Kidney (tissue), 22 donors: ENCODE measurements at regions of chr14 and their contacts with region 1.

Region 1: DNA sequence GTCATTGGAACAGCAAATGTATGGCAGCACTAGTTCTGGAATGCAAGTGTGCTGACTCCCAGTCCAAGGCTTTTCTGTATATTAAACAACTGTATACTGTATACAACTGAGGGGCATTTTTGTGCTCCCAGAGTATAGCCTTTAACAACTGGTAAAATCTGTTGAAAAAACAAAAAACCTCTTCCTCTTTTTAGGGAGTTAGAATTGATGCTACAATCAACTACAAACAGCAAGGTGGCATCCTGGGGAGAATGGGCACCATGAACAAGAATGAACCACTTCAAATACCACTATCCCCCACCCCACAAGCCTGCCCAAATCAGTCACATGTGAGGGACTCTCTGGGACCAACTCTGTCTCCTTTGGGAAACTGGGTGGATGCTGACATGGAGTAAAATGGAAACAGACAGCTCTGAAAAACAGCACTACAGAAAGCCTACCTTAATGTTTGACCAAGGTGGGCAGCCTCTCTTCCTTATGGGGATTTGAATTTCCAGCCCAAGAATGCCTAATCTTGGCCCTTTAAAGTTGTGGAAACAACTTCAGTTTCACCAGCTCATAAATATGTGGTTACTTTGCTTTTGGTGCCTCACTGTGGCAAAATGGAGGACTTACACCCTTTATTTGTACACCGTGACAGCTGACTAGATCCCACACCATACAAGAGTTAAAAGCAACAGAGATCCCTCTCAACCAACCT is 7.5 kb downstream of the VTI1B start:
- DNase-seq: peak in 3 of 5 donors; percentile 45 to 75 (median 69)
- H3K4me3 ChIP-seq: no peak overlapping the region
- H3K27ac ChIP-seq: no peak overlapping the region
- H3K4me1 ChIP-seq: peaks cover 0 to 6% (median 0%) of the 10 kb centered on the region in 3 donors
- H3K27me3 ChIP-seq: no peaks in the 10 kb centered on the region
- CTCF ChIP-seq: peak; percentile 73

Region 2: DNA sequence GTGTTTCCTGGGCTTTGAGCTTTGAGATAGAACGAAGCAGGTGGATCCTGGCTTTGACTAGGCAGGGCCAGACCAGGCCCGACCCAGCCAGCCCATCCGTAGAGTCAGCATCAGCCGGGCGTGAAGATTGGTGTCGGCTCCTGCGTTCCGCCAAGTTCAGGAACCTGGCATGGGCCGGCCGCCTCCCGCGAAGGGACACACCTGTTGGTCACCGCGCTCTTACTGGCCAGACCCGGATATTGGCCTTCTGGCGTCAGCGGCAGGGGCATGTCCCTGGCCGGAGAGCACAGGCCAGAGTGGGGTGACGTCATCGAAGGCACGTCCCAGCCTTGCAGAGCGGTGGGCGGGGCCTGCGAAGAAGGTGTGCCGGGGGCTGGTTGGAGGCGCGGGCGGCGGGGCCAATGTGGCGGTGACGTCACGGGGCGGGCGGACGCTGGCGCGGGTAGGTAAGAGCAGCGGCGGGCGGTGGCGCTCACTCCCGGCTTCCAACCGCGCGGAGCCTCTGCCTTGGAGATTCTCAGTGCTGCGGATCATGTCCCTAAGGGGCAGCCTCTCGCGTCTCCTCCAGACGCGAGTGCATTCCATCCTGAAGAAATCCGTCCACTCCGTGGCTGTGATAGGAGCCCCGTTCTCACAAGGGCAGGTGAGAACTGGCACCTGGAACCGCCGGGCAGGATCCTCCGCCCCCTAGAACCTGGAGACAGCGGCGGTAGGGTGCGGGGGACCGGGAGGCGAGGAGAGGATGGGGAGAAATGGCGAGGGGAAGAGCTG is 47.3 kb before region 1 on chr14 and contains the start of gene ARG2:
- intact Hi-C with region 1: loop called (anchors 10 kb)
- DNase-seq: peak; percentile 96 to 100 (median 97)
- H3K4me3 ChIP-seq: peak within 1 kb of the TSS; percentile 63 to 78 (median 76)
- H3K27ac ChIP-seq: peak within 1 kb of the TSS; percentile 79 to 85
- H3K4me1 ChIP-seq: peaks cover 0 to 6% (median 5%) of the 10 kb centered on the region in 3 donors
- H3K27me3 ChIP-seq: no peaks in the 10 kb centered on the region
- CTCF ChIP-seq: peak; percentile 17
- total RNA-seq, gene ARG2: 19.2 TPM